CD8-positive, alpha-beta T cell (primary cell): ENCODE measurements at regions of chr21 and their contacts with region 1.

Region 1: GRCh38 chr21:31580866-31581276 is 78.6 kb upstream of the SOD1 start:
- DNase-seq: peak; percentile 43 to 85 (median 73)
- ATAC-seq: peak; percentile 92
- H3K4me3 ChIP-seq: no peak overlapping the region
- H3K4me3 Mint-ChIP-seq: no peak overlapping the region
- H3K27ac ChIP-seq: no peak overlapping the region
- H3K27ac Mint-ChIP-seq: no peak overlapping the region
- H3K4me1 ChIP-seq: no peaks in the 10 kb centered on the region
- H3K4me1 Mint-ChIP-seq: no peaks in the 10 kb centered on the region
- H3K27me3 ChIP-seq: peaks cover 0 to 2% of the 10 kb centered on the region in 2 experiments
- H3K27me3 Mint-ChIP-seq: peaks cover 2% of the 10 kb centered on the region
- CTCF ChIP-seq: peak; percentile 79

Region 2: DNA sequence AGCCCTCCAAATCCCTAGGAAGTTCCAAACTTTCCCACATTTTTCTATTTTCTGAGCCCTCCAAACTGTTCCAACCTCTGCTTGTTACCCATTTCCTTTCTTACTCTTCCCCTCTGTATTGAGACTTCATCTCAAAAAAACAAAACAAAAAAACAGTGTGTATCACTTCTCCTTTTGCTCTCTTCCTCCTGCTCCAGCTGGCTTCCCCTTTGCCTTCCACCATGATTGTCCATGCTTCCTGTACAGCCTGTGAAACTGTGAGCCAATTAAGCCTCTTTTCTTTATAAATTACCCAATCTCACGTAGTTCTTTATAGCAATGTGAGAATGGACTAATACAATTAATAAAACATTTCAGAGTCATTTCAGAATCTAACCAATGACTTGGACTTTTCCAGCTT is 473.0 kb before region 1 on chr21:
- CTCF ChIA-PET with region 1: interaction called, 38 read pairs
- POLR2A ChIA-PET with region 1: no interaction called
- intact Hi-C with region 1: no loop called
- DNase-seq: no peak
- ATAC-seq: no peak
- H3K4me3 ChIP-seq: no peak overlapping the region
- H3K4me3 Mint-ChIP-seq: no peak overlapping the region
- H3K27ac ChIP-seq: no peak overlapping the region
- H3K27ac Mint-ChIP-seq: peak overlapping the region; percentile 12
- H3K4me1 ChIP-seq: no peaks in the 10 kb centered on the region
- H3K4me1 Mint-ChIP-seq: peaks cover 12% of the 10 kb centered on the region
- H3K27me3 ChIP-seq: no peaks in the 10 kb centered on the region
- H3K27me3 Mint-ChIP-seq: no peaks in the 10 kb centered on the region
- CTCF ChIP-seq: no peak

Region 3: GRCh38 chr21:31198575-31198974 is 382.3 kb before region 1 on chr21:
- CTCF ChIA-PET with region 1: interaction called, 151 read pairs
- POLR2A ChIA-PET with region 1: no interaction called
- intact Hi-C with region 1: loop called (anchors 1 kb)
- DNase-seq: peak in 2 of 9 experiments; percentile 44 to 63
- ATAC-seq: peak; percentile 44
- H3K4me3 ChIP-seq: no peak overlapping the region
- H3K4me3 Mint-ChIP-seq: no peak overlapping the region
- H3K27ac ChIP-seq: no peak overlapping the region
- H3K27ac Mint-ChIP-seq: no peak overlapping the region
- H3K4me1 ChIP-seq: no peaks in the 10 kb centered on the region
- H3K4me1 Mint-ChIP-seq: peaks cover 18% of the 10 kb centered on the region
- H3K27me3 ChIP-seq: no peaks in the 10 kb centered on the region
- H3K27me3 Mint-ChIP-seq: no peaks in the 10 kb centered on the region
- CTCF ChIP-seq: peak; percentile 72

Region 4: DNA sequence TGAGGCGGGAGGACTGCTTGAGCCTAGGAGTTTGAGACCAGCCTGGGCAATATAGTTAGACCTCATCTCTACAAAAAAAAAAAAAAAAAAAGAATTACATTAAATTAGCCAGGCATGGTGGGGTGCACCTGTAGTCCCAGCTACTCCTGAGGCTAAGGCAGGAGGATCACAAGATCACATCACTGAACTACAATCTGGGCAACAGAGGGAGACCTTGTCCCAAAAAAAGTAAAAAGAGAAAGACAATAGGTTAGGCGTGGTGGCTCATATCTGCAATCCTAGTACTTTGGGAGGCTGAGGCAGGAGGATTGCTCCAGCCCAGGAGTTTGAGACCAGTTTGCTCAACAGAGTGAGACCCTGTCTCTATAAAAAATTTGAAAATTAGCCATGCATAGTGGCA is 367.1 kb before region 1 on chr21:
- CTCF ChIA-PET with region 1: interaction called, 31 read pairs
- POLR2A ChIA-PET with region 1: interaction called, 3 read pairs
- intact Hi-C with region 1: loop called (anchors 1 to 5 kb)
- DNase-seq: peak in 2 of 9 experiments; percentile 33 to 42
- ATAC-seq: no peak
- H3K4me3 ChIP-seq: no peak overlapping the region
- H3K4me3 Mint-ChIP-seq: no peak overlapping the region
- H3K27ac ChIP-seq: no peak overlapping the region
- H3K27ac Mint-ChIP-seq: no peak overlapping the region
- H3K4me1 ChIP-seq: no peaks in the 10 kb centered on the region
- H3K4me1 Mint-ChIP-seq: no peaks in the 10 kb centered on the region
- H3K27me3 ChIP-seq: no peaks in the 10 kb centered on the region
- H3K27me3 Mint-ChIP-seq: no peaks in the 10 kb centered on the region
- CTCF ChIP-seq: peak; percentile 25

Region 5: GRCh38 chr21:31558962-31559367 is 21.9 kb before region 1 on chr21:
- CTCF ChIA-PET with region 1: interaction called, 25 read pairs
- POLR2A ChIA-PET with region 1: no interaction called
- intact Hi-C with region 1: no loop called
- DNase-seq: peak; percentile 76 to 93 (median 89)
- ATAC-seq: peak; percentile 83
- H3K4me3 ChIP-seq: peak overlapping the region; percentile 51 to 54
- H3K4me3 Mint-ChIP-seq: peak overlapping the region; percentile 92
- H3K27ac ChIP-seq: peak overlapping the region in 1 of 2 experiments; percentile 7
- H3K27ac Mint-ChIP-seq: no peak overlapping the region
- H3K4me1 ChIP-seq: peaks cover 15% of the 10 kb centered on the region
- H3K4me1 Mint-ChIP-seq: peaks cover 25% of the 10 kb centered on the region
- H3K27me3 ChIP-seq: peaks cover 0 to 2% of the 10 kb centered on the region in 2 experiments
- H3K27me3 Mint-ChIP-seq: peaks cover 8% of the 10 kb centered on the region
- CTCF ChIP-seq: no peak

Region 6: DNA sequence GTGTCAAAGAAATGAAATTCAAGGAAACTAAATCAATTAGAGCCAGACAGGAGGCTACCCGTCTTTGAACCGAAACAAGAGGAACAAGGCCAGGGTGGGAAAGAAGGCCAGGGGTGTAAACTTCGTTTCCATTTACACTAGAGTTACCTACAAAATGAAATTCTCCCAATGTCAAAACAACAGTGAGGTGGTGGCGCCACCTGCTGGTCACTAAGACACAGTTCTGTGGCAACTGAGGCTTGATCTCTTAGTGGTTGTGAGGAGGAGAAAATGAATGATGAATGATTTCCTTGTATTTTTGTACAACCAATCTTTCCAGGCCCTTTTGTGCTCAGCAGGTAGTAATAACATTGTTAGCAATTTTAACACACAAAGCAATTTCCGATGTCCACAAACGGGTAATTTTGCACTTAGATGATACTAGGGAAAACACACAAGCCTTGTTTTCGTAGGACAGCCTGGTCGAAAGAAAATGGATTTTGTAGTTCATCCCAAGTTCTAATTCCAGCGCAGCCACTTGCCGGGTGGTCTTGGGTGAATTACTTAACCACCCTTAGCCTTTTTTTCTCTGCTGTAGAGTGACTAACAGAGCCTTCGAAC is 23.8 kb after region 1 on chr21:
- CTCF ChIA-PET with region 1: interaction called, 32 read pairs
- POLR2A ChIA-PET with region 1: no interaction called
- intact Hi-C with region 1: loop called in 1 of 2 experiments (anchors 2 kb)
- DNase-seq: peak; percentile 33 to 82 (median 76)
- ATAC-seq: peak; percentile 74
- H3K4me3 ChIP-seq: no peak overlapping the region
- H3K4me3 Mint-ChIP-seq: no peak overlapping the region
- H3K27ac ChIP-seq: no peak overlapping the region
- H3K27ac Mint-ChIP-seq: no peak overlapping the region
- H3K4me1 ChIP-seq: no peaks in the 10 kb centered on the region
- H3K4me1 Mint-ChIP-seq: peaks cover 3% of the 10 kb centered on the region
- H3K27me3 ChIP-seq: no peaks in the 10 kb centered on the region
- H3K27me3 Mint-ChIP-seq: peaks cover 2% of the 10 kb centered on the region
- CTCF ChIP-seq: peak; percentile 89

Region 7: DNA sequence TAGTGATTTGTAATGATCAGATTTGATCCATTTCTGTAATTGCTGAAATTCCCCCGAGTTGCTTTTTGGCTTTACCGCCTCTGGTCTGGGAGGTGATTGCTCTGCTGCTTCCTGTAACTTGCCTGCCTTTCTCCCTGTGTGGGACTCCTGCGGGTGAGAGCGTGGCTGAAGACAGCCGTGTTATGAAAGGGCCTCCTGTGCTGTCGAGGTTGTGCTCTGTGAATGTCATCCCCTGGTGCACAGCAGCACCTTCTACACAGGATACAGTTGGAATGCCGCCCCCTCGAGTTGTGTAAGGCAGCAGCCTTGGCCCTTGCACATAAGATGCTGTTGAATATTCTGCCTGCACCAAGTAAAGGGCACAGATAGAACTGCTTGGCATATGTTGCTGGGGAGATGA is 84.5 kb after region 1 on chr21:
- CTCF ChIA-PET with region 1: no interaction called
- POLR2A ChIA-PET with region 1: no interaction called
- intact Hi-C with region 1: no loop called
- DNase-seq: peak in 2 of 9 experiments; percentile 27 to 46
- ATAC-seq: peak; percentile 48
- H3K4me3 ChIP-seq: no peak overlapping the region
- H3K4me3 Mint-ChIP-seq: peak overlapping the region; percentile 9
- H3K27ac ChIP-seq: no peak overlapping the region
- H3K27ac Mint-ChIP-seq: peak overlapping the region; percentile 43
- H3K4me1 ChIP-seq: peaks cover 60% of the 10 kb centered on the region
- H3K4me1 Mint-ChIP-seq: peaks cover 71% of the 10 kb centered on the region
- H3K27me3 ChIP-seq: no peaks in the 10 kb centered on the region
- H3K27me3 Mint-ChIP-seq: no peaks in the 10 kb centered on the region
- CTCF ChIP-seq: no peak